ENCODE measurements at regions of chr4 and their contacts with region 1.

Region 1: GRCh38 chr4:169225058-169225751 is 45.6 kb downstream of the SH3RF1 start:
- DNase-seq: no peak
- H3K4me3 Mint-ChIP-seq: no peak overlapping the region
- H3K27ac Mint-ChIP-seq: no peak overlapping the region
- H3K4me1 Mint-ChIP-seq: no peaks in the 10 kb centered on the region
- H3K27me3 Mint-ChIP-seq: no peaks in the 10 kb centered on the region

Region 2: GRCh38 chr4:169115897-169116254 is 109.3 kb before region 1 on chr4:
- CTCF ChIA-PET with region 1: no interaction called
- POLR2A ChIA-PET with region 1: no interaction called
- intact Hi-C with region 1: loop called (anchors 5 kb)
- DNase-seq: no peak
- H3K4me3 Mint-ChIP-seq: no peak overlapping the region
- H3K27ac Mint-ChIP-seq: no peak overlapping the region
- H3K4me1 Mint-ChIP-seq: no peaks in the 10 kb centered on the region
- H3K27me3 Mint-ChIP-seq: peaks cover 4% of the 10 kb centered on the region

Region 3: GRCh38 chr4:169159624-169160171 is 65.5 kb before region 1 on chr4:
- CTCF ChIA-PET with region 1: no interaction called
- POLR2A ChIA-PET with region 1: no interaction called
- intact Hi-C with region 1: no loop called
- DNase-seq: no peak
- H3K4me3 Mint-ChIP-seq: no peak overlapping the region
- H3K27ac Mint-ChIP-seq: no peak overlapping the region
- H3K4me1 Mint-ChIP-seq: no peaks in the 10 kb centered on the region
- H3K27me3 Mint-ChIP-seq: peaks cover 10% of the 10 kb centered on the region

Region 4: DNA sequence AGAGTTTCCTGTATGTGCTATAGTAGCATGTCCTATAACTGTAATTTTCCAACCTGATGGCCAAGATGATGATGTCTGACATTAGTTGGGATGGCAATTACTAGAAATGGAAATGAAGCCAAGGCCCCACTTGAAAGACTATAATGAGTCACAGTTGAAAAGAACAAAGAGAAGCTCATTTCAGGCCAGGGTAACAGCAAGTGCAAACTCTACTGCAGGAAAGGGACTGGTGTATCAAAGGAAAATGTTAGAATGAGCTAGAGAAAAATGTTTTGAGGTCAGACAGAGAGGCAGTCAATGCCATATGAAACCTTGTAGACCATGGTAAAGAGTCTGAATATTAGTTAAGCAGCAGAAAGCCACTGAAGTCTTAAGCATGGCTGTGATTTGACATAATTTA is 191.8 kb after region 1 on chr4:
- CTCF ChIA-PET with region 1: no interaction called
- POLR2A ChIA-PET with region 1: no interaction called
- intact Hi-C with region 1: no loop called
- DNase-seq: no peak
- H3K4me3 Mint-ChIP-seq: no peak overlapping the region
- H3K27ac Mint-ChIP-seq: no peak overlapping the region
- H3K4me1 Mint-ChIP-seq: peaks cover 15% of the 10 kb centered on the region
- H3K27me3 Mint-ChIP-seq: no peaks in the 10 kb centered on the region

Measured in activated CD4-positive, alpha-beta memory T cell treated with anti-CD3 and anti-CD28 coated beads for 36 hours (primary cell).